BJ (cell line): ENCODE measurements at regions of chr14 and their contacts with region 1.

Region 1: DNA sequence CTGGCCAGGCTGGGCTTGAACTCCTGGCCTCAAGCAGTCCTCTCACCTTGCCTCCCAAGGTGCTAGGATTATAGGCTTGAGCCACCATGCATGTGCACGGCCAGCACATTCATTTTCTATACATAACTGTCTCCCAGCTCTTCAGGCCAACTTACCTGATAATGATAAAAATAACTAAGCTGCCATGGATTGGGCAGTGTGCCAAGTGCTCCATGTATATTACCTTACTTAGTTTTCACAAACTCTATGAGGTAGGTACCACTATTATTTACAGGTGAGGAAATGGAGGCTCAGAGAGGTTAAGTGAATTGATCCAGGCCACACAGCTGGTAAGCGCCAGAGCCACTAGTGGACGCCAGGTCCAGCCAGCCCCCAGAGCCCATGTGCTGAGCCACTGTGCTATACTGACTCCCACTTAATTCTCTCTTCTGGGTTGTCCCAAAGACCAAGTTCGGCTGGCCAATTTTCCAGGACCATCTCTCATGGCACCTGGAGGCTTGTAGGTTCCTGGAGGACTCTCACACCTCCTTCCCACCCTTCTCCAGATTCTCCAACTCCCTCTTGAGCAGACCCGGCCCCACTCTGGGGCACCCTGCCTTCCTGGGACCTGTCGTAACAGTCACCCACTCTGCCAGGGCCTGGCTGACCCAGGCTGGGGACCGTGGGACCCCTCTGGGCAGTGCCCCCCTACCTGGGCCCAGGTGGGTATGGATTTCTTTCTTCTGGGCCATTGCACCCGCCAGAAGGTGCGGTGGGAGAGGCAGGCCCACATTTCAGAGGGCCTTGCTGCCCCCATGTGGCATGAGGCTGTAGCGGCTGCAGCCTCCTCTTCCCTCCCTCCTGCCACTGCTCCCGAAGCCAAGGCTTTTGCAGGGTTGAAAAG is 30.2 kb upstream of the CIPC start:
- DNase-seq: no peak
- H3K4me3 ChIP-seq: no peak overlapping the region
- H3K27me3 ChIP-seq: no peaks in the 10 kb centered on the region
- CTCF ChIP-seq: peak; percentile 94

Region 2: GRCh38 chr14:76640923-76641395 is 426.9 kb before region 1 on chr14:
- CTCF ChIA-PET with region 1: no interaction called
- POLR2A ChIA-PET with region 1: no interaction called
- DNase-seq: no peak
- H3K4me3 ChIP-seq: no peak overlapping the region
- H3K27me3 ChIP-seq: peaks cover 3% of the 10 kb centered on the region; the same call in 1 of the 2 replicates
- CTCF ChIP-seq: no peak

Region 3: DNA sequence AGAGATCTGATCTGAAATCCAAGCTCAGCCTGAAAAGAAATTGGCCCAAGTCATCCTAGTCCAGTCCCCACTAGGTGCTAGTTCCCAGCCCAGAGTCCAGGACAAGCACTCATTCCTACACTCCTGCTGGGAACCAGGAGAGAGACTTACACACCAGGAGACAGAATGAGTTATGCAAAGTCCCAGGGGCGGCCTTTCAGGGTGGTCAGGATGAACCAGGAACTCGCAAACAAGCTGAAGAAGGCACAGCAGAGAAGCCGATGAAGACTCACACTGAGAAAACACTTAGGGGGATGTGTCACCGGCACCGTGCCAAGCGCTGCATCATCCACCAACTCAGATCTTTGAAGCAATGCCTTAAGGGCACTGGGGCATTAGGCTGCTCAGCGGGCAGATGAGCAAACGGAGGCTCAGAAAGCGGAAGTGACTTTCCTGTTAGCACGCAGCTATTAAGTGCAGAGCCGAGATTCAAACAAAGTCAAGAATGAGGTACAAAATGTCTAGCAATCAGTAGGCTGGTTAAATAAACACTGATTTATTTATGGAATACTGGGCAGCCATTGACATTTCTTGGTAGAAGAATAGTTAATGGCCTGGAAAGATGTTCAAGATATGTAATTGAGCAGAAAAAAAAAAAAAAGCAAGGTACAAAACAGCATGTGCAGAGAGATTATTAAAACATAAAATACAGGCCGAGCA is 163.0 kb before region 1 on chr14:
- CTCF ChIA-PET with region 1: interaction called, 278 read pairs
- POLR2A ChIA-PET with region 1: no interaction called
- DNase-seq: peak; percentile 89
- H3K4me3 ChIP-seq: peak overlapping the region; percentile 16
- H3K27me3 ChIP-seq: no peaks in the 10 kb centered on the region
- CTCF ChIP-seq: no peak

Region 4: GRCh38 chr14:77040059-77040740 is 27.7 kb before region 1 on chr14:
- CTCF ChIA-PET with region 1: interaction called, 10 read pairs
- POLR2A ChIA-PET with region 1: no interaction called
- DNase-seq: peak; percentile 94
- H3K4me3 ChIP-seq: peak overlapping the region; percentile 22
- H3K27me3 ChIP-seq: no peaks in the 10 kb centered on the region
- CTCF ChIP-seq: no peak

Region 5: GRCh38 chr14:77086017-77086736 is 18.3 kb after region 1 on chr14:
- CTCF ChIA-PET with region 1: interaction called, 74 read pairs
- POLR2A ChIA-PET with region 1: no interaction called
- DNase-seq: no peak
- H3K4me3 ChIP-seq: no peak overlapping the region
- H3K27me3 ChIP-seq: peaks cover 7% of the 10 kb centered on the region
- CTCF ChIP-seq: no peak

Region 6: GRCh38 chr14:77290741-77291140 is 222.9 kb after region 1 on chr14:
- CTCF ChIA-PET with region 1: no interaction called
- POLR2A ChIA-PET with region 1: no interaction called
- DNase-seq: no peak
- H3K4me3 ChIP-seq: no peak overlapping the region
- H3K27me3 ChIP-seq: no peaks in the 10 kb centered on the region
- CTCF ChIP-seq: no peak